ENCODE measurements at regions of chr10 and their contacts with region 1.

Region 1: DNA sequence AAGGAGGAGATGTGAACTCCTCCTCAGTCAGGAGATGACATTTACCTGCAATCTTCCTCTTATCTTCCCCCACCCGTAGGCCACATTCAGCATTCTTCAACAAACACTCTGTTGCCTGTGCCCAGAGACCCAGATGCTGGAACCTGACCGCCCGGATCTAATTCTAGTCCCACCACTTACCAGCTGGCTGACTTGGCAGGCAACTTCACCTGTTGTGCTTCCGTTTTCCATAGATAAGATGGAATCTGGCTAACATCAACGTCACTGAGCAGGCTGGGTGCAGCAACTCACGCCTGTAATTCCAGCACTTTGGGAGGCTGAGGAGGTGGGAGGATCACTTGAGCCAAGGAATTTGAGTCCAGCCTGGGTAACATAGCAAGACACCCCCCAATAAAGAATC is 21.3 kb upstream of the FXYD4 start:
- DNase-seq: peak; percentile 75 to 81
- H3K4me3 ChIP-seq: peak overlapping the region in 1 of 4 donors; percentile 31
- H3K27ac ChIP-seq: no peak overlapping the region
- H3K4me1 ChIP-seq: peaks cover 7 to 17% (median 11%) of the 10 kb centered on the region in 4 donors
- H3K27me3 ChIP-seq: peaks cover 0 to 19% (median 7%) of the 10 kb centered on the region in 3 donors
- CTCF ChIP-seq: no peak
- EP300 ChIP-seq: no peak
- POLR2A ChIP-seq: no peak

Region 2: GRCh38 chr10:43218443-43219185 is 131.5 kb before region 1 on chr10:
- intact Hi-C with region 1: no loop called
- DNase-seq: no peak
- H3K4me3 ChIP-seq: no peak overlapping the region
- H3K27ac ChIP-seq: no peak overlapping the region
- H3K4me1 ChIP-seq: no peaks in the 10 kb centered on the region
- H3K27me3 ChIP-seq: peaks cover 0 to 58% (median 0%) of the 10 kb centered on the region in 3 donors
- CTCF ChIP-seq: no peak
- EP300 ChIP-seq: no peak
- POLR2A ChIP-seq: no peak

Region 3: GRCh38 chr10:43292755-43293676 is 57.1 kb before region 1 on chr10:
- intact Hi-C with region 1: loop called (anchors 10 kb)
- DNase-seq: peak; percentile 61 to 80
- H3K4me3 ChIP-seq: no peak overlapping the region
- H3K27ac ChIP-seq: no peak overlapping the region
- H3K4me1 ChIP-seq: peaks cover 0 to 13% (median 4%) of the 10 kb centered on the region in 4 donors
- H3K27me3 ChIP-seq: peaks cover 0 to 45% (median 10%) of the 10 kb centered on the region in 3 donors
- CTCF ChIP-seq: peak in 5 of 7 experiments; percentile 54 to 80 (median 59)
- EP300 ChIP-seq: no peak
- POLR2A ChIP-seq: no peak

Region 4: GRCh38 chr10:43471935-43472720 is 122.0 kb after region 1 on chr10:
- intact Hi-C with region 1: no loop called
- DNase-seq: no peak
- H3K4me3 ChIP-seq: no peak overlapping the region
- H3K27ac ChIP-seq: no peak overlapping the region
- H3K4me1 ChIP-seq: no peaks in the 10 kb centered on the region
- H3K27me3 ChIP-seq: no peaks in the 10 kb centered on the region
- CTCF ChIP-seq: no peak
- EP300 ChIP-seq: no peak
- POLR2A ChIP-seq: no peak

Region 5: GRCh38 chr10:43482319-43483078 is 132.3 kb after region 1 on chr10:
- intact Hi-C with region 1: no loop called
- DNase-seq: no peak
- H3K4me3 ChIP-seq: no peak overlapping the region
- H3K27ac ChIP-seq: no peak overlapping the region
- H3K4me1 ChIP-seq: no peaks in the 10 kb centered on the region
- H3K27me3 ChIP-seq: no peaks in the 10 kb centered on the region
- CTCF ChIP-seq: no peak
- EP300 ChIP-seq: no peak
- POLR2A ChIP-seq: no peak